ENCODE measurements at regions of chr12 and their contacts with region 1.

Region 1: DNA sequence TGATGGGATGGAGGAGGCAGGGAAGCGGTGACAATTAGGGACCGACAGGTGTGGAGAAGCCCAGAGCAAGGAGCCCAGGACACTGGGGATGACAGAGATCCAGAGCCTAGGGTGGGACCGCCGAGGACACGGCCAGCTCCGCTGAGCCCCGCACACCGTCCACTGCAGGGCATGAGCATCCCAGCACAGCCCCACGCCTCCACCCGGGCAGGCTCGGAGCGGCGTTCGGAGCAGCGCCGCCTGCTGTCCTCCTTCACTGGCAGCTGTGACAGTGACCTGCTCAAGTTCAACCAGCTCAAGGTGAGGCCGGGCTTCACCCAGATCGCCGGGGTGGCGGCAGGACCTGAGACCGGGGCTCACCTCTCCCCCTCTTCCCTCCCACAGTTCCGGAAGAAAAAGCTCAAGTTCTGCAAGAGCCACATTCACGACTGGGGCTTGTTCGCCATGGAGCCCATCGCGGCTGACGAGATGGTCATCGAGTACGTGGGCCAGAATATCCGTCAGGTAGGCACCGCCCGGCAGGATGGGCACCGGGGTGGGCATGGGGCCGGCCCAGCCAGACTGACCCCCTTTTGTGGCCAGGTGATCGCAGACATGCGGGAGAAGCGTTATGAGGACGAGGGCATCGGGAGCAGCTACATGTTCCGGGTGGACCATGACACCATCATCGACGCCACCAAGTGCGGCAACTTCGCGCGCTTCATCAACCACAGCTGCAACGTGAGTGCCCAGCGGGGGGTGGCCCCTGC is 23.7 kb downstream of the SETD1B start:
- DNase-seq: no peak
- ATAC-seq: peak in 1 of 2 experiments; percentile 52; a peak in 3 of 6 replicates
- H3K4me3 ChIP-seq: no peak overlapping the region
- H3K27ac ChIP-seq: no peak overlapping the region
- H3K4me1 ChIP-seq: no peaks in the 10 kb centered on the region
- CTCF ChIP-seq: no peak
- EP300 ChIP-seq: no peak
- POLR2A ChIP-seq: no peak
- RAD21 ChIP-seq: no peak

Region 2: DNA sequence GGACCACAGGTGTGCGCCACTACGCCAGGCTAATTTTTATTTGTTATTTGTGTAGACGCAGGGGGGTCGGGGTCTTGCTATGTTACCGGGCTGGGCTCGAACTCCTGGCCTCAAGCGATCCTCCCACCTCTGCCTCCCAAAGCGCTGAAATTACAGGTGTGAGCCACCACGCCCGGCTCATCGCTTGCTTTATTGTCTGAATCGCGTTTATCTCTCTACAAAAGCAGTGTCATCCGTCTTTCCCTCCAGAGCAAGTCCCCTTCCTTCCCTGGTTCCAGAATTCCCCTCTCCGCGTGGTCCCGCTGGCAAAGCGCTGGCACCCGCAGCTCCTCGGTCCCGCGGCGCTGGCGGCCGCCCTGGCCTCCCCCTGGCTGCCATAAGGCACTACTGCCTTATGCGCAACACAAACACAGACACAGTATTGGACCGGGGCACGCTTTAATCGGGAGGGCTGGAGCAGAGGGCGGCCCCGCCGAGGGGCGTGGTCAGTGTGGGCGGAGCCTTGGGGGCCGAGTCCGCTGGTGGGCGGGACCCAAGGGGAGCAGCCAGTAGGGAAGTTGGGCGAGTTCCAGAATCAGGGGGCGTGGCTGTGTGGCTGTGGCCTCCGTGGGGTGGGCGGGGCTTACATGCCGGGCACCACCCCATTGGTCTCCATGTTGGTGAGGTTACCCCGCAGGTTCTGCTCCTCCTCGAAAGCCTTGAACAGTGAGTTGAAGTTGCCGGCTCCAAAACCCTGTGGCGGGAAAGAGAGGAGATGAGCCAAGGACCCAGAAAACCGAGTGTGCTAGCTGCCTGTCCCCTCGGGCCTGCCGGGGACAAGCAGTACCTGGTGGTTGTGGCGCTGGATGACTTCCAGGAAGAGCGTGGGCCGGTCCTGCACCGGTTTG is 11.8 kb after region 1 on chr12:
- CTCF ChIA-PET with region 1: interaction called, 10 read pairs
- POLR2A ChIA-PET with region 1: no interaction called
- DNase-seq: peak; percentile 96 to 98
- ATAC-seq: peak; percentile 93 to 94
- H3K4me3 ChIP-seq: peak overlapping the region; percentile 54
- H3K27ac ChIP-seq: peak overlapping the region; percentile 76 to 88
- H3K4me1 ChIP-seq: no peaks in the 10 kb centered on the region
- CTCF ChIP-seq: no peak
- EP300 ChIP-seq: no peak
- POLR2A ChIP-seq: peak; percentile 55
- RAD21 ChIP-seq: no peak

Measured in A549 (cell line).